Activated CD4-positive, alpha-beta T cell treated with anti-CD3 and anti-CD28 coated beads, Interleukin-2, amount 10 ng/mL, durations not matched to agents 24 days and 14 days (primary cell): ENCODE measurements at regions of chr12 and their contacts with region 1.

Region 1: DNA sequence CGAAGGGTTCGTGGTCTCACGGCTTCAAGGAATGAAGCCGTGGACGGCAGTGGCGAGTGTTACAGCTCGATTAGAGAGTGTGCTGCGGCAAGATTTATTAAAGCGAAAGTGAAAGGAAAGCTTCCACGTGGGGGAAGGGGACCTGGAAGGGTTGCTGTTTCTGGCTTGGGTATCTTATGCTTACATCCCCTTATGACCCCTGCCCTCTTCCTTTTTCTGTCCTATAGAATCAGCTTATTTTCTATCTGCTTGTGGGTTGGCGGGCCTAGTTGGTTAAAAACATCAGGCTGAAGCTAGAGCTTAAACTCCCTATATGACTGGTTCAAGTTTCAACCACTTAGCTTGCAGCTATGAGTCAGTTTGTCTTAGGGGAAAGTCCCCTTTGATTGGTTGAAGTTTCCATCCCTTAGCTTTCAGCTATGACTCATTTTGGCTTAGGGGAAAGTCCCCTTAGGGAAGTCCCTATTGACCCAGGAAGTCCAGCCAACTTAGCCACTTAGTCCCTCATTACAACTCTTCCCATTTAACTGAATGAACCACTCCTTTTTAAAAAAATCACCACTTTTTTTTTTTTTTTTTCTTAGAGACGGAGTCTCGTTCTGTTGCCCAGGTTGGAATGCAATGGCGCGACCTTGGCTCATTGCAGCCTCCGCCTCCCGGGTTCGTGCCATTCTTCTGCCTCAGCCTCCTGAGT is 1494.7 kb upstream of the TMEM132C start:
- DNase-seq: peak; percentile 76
- H3K4me3 Mint-ChIP-seq: peak overlapping the region; percentile 72
- H3K27ac Mint-ChIP-seq: peak overlapping the region; percentile 95
- H3K4me1 Mint-ChIP-seq: peaks cover 15% of the 10 kb centered on the region
- H3K27me3 Mint-ChIP-seq: no peaks in the 10 kb centered on the region

Region 2: GRCh38 chr12:126588586-126589249 is 183.6 kb before region 1 on chr12:
- intact Hi-C with region 1: loop called (anchors 5 kb)
- DNase-seq: peak; percentile 73
- H3K4me3 Mint-ChIP-seq: peak overlapping the region; percentile 62
- H3K27ac Mint-ChIP-seq: peak overlapping the region; percentile 81
- H3K4me1 Mint-ChIP-seq: peaks cover 14% of the 10 kb centered on the region
- H3K27me3 Mint-ChIP-seq: no peaks in the 10 kb centered on the region

Region 3: GRCh38 chr12:126651133-126651532 is 121.2 kb before region 1 on chr12:
- intact Hi-C with region 1: no loop called
- DNase-seq: no peak
- H3K4me3 Mint-ChIP-seq: no peak overlapping the region
- H3K27ac Mint-ChIP-seq: no peak overlapping the region
- H3K4me1 Mint-ChIP-seq: no peaks in the 10 kb centered on the region
- H3K27me3 Mint-ChIP-seq: no peaks in the 10 kb centered on the region